ENCODE measurements at regions of chr20 and their contacts with region 1.

Region 1: GRCh38 chr20:22684072-22684762 is 99.8 kb upstream of the FOXA2 start:
- DNase-seq: peak; percentile 85
- H3K4me3 ChIP-seq: no peak overlapping the region
- H3K27ac ChIP-seq: no peak overlapping the region
- H3K4me1 ChIP-seq: no peaks in the 10 kb centered on the region
- H3K27me3 ChIP-seq: no peaks in the 10 kb centered on the region
- CTCF ChIP-seq: peak; percentile 74 to 90 (median 88)
- POLR2A ChIP-seq: no peak

Region 2: GRCh38 chr20:22341508-22341907 is 342.7 kb before region 1 on chr20:
- intact Hi-C with region 1: loop called (anchors 5 kb)
- DNase-seq: no peak
- H3K4me3 ChIP-seq: no peak overlapping the region
- H3K27ac ChIP-seq: no peak overlapping the region
- H3K4me1 ChIP-seq: peaks cover 6% of the 10 kb centered on the region
- H3K27me3 ChIP-seq: no peaks in the 10 kb centered on the region
- CTCF ChIP-seq: no peak
- POLR2A ChIP-seq: no peak

Region 3: DNA sequence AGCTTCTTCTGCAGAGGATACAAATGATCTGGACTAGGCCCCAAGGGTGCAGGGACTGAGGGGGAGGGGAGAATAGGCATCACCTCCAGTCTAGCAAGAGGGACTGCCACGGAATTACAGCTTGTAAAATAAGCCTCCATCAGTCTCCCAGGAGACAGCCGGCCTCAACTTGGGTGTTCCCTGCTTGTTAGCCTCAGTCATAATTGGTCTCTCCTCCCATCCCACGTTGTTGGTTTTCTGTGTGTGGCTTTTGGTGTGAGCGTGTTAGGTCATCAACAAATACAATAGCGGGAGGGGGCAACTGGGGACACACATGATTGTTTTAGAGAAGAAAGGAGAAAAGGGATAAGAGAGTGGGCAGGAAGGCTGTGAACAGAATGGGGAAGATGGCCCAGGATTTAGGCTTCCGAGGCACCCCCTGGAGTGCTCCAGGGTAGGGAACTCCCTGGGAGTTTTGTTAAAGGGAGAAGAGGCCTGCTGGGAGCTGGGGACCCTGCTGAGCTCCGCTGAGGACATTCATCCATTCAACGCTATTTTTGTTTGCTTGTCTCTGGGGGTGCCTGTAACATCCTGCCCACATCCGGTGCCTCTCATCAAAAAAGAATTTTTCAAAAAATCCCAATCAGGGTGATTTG is 109.0 kb before region 1 on chr20:
- intact Hi-C with region 1: no loop called
- DNase-seq: no peak
- H3K4me3 ChIP-seq: no peak overlapping the region
- H3K27ac ChIP-seq: no peak overlapping the region
- H3K4me1 ChIP-seq: peaks cover 4% of the 10 kb centered on the region
- H3K27me3 ChIP-seq: no peaks in the 10 kb centered on the region
- CTCF ChIP-seq: no peak
- POLR2A ChIP-seq: no peak

Region 4: DNA sequence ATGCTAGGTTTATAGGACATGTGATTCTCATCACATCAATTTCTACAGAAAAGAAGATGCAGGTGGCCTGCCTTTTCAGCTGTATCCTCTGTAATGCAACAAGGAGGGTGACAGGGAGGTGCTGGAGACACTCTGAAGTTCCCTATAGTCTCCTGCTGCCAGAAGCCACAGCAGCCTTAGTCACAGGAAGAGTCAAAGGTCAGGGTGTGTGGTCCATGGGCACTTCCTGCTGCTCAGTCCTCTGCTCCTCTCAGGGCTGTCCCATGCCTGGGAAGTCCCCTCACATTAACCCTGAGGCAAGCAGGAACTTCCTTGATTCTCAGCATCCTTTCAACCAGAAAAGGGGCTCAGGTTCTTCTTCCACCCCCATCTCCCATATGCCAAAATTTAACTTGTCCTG is 45.0 kb after region 1 on chr20:
- intact Hi-C with region 1: no loop called
- DNase-seq: no peak
- H3K4me3 ChIP-seq: no peak overlapping the region
- H3K27ac ChIP-seq: no peak overlapping the region
- H3K4me1 ChIP-seq: no peaks in the 10 kb centered on the region
- H3K27me3 ChIP-seq: no peaks in the 10 kb centered on the region
- CTCF ChIP-seq: no peak
- POLR2A ChIP-seq: no peak